ENCODE measurements at regions of chrX and their contacts with region 1.

Region 1: GRCh38 chrX:19904778-19905367 is 17.5 kb upstream of the SH3KBP1 start:
- DNase-seq: peak; percentile 34
- ATAC-seq: peak; percentile 78
- H3K4me3 ChIP-seq: no peak overlapping the region
- H3K27ac ChIP-seq: no peak overlapping the region
- H3K4me1 ChIP-seq: peaks cover 4 to 5% of the 10 kb centered on the region in 2 experiments; a peak in 1 of 4 replicates
- H3K27me3 ChIP-seq: no peaks in the 10 kb centered on the region
- CTCF ChIP-seq: peak; percentile 63 to 71 (median 70)
- POLR2A ChIP-seq: no peak
- RAD21 ChIP-seq: peak; percentile 83

Region 2: GRCh38 chrX:19990556-19991349 is 85.9 kb after region 1 on chrX and contains the start of gene BCLAF3:
- CTCF ChIA-PET with region 1: no interaction called
- POLR2A ChIA-PET with region 1: no interaction called
- RAD21 ChIA-PET with region 1: no interaction called
- intact Hi-C with region 1: loop called (anchors 2 kb)
- DNase-seq: peak; percentile 64
- ATAC-seq: peak; percentile 98
- H3K4me3 ChIP-seq: peak within 1 kb of the TSS; percentile 58 to 61
- H3K27ac ChIP-seq: peak within 1 kb of the TSS; percentile 26; the same call in 1 of the 2 replicates
- H3K4me1 ChIP-seq: peaks cover 2 to 5% of the 10 kb centered on the region in 2 experiments; a peak in 3 of 4 replicates
- H3K27me3 ChIP-seq: no peaks in the 10 kb centered on the region
- CTCF ChIP-seq: peak; percentile 64 to 90 (median 70)
- POLR2A ChIP-seq: no peak
- RAD21 ChIP-seq: peak; percentile 64
- total RNA-seq, gene BCLAF3: 5.3 TPM

Region 3: DNA sequence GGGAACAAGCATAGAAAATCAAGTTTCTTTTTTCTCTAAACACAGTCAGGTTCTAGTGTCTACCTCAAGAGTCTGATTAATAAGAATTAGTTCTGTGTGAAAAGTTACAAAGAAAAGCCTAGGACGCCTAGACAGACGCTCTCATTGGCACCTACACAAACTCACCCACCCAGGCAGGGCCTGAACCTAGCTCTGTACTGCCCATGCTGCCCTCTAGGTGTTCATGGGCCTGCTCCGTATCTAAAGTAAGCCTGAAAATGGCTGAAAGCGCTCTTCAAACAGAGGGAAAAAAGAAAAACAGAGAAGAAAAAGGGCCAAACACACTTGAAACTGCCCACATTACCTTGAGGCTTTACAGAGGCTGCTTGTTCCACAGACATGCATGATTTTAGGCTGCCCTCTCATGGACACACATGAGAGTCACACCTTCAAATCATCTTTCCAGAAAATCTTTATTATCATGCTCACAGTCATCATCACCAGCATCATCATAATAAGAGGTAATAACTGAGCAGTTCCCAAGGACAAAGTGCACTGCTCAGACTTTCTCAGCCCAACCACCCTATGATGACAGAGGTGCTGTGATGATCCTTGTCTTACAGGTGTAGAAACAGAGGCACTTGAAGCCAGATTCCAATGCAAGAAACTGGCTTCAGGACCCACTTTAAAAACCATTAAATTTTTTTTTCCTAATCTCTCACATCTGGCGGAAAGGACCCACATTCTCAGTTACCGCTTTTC is 162.3 kb after region 1 on chrX:
- CTCF ChIA-PET with region 1: interaction called, 31 read pairs
- POLR2A ChIA-PET with region 1: no interaction called
- RAD21 ChIA-PET with region 1: interaction called, 5 read pairs
- intact Hi-C with region 1: loop called (anchors 1 kb)
- DNase-seq: peak; percentile 38
- ATAC-seq: peak; percentile 88
- H3K4me3 ChIP-seq: no peak overlapping the region
- H3K27ac ChIP-seq: no peak overlapping the region
- H3K4me1 ChIP-seq: peaks cover 5 to 17% of the 10 kb centered on the region in 2 experiments
- H3K27me3 ChIP-seq: no peaks in the 10 kb centered on the region
- CTCF ChIP-seq: peak; percentile 50 to 69 (median 61); a peak in 5 of 6 replicates
- POLR2A ChIP-seq: no peak
- RAD21 ChIP-seq: peak; percentile 79

Region 4: DNA sequence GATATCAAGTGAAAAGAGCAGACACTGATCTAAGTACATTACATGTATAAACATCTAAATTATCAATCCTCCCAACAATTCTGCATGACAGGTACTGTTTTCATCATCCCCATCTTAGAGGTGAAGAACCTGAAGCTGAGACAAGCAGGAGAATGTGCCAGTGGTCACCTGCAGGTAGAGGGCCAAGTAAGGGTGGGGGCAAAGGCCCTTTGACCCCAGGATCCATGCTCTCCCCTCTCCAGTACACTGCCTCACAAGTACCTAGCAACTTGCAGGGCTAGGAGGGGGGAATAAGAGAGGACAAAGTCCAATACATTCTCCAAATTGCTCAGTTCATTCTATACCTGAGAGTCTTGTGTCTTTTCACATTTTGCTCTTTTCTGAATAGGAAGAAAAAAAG is 220.1 kb after region 1 on chrX:
- CTCF ChIA-PET with region 1: interaction called, 3 read pairs
- POLR2A ChIA-PET with region 1: no interaction called
- RAD21 ChIA-PET with region 1: no interaction called
- intact Hi-C with region 1: loop called (anchors 2 kb)
- DNase-seq: no peak
- ATAC-seq: no peak
- H3K4me3 ChIP-seq: no peak overlapping the region
- H3K27ac ChIP-seq: no peak overlapping the region
- H3K4me1 ChIP-seq: no peaks in the 10 kb centered on the region
- H3K27me3 ChIP-seq: no peaks in the 10 kb centered on the region
- CTCF ChIP-seq: no peak
- POLR2A ChIP-seq: no peak
- RAD21 ChIP-seq: no peak

Region 5: GRCh38 chrX:20442597-20442996 is 537.7 kb after region 1 on chrX:
- CTCF ChIA-PET with region 1: no interaction called
- POLR2A ChIA-PET with region 1: no interaction called
- RAD21 ChIA-PET with region 1: no interaction called
- intact Hi-C with region 1: loop called (anchors 10 kb)
- DNase-seq: peak; percentile 65
- ATAC-seq: peak; percentile 92
- H3K4me3 ChIP-seq: no peak overlapping the region
- H3K27ac ChIP-seq: no peak overlapping the region
- H3K4me1 ChIP-seq: no peaks in the 10 kb centered on the region
- H3K27me3 ChIP-seq: no peaks in the 10 kb centered on the region
- CTCF ChIP-seq: peak; percentile 48 to 63 (median 63); a peak in 5 of 6 replicates
- POLR2A ChIP-seq: no peak
- RAD21 ChIP-seq: peak; percentile 74